Panc1 (cell line): ENCODE measurements at regions of chr16 and their contacts with region 1.

Region 1: GRCh38 chr16:25051406-25052150 is 36.4 kb upstream of the ARHGAP17 start:
- DNase-seq: no peak
- ATAC-seq: no peak
- H3K4me3 ChIP-seq: peak overlapping the region in 1 of 2 experiments; percentile 23; a peak in 2 of 4 replicates
- H3K27ac ChIP-seq: peak overlapping the region; percentile 97
- H3K4me1 ChIP-seq: peaks cover 40% of the 10 kb centered on the region
- H3K27me3 ChIP-seq: no peaks in the 10 kb centered on the region
- CTCF ChIP-seq: no peak

Region 2: GRCh38 chr16:24918641-24919040 is 132.9 kb before region 1 on chr16:
- CTCF ChIA-PET with region 1: interaction called, 11 read pairs
- POLR2A ChIA-PET with region 1: no interaction called
- in situ Hi-C with region 1: no loop called
- intact Hi-C with region 1: no loop called
- DNase-seq: no peak
- ATAC-seq: no peak
- H3K4me3 ChIP-seq: no peak overlapping the region
- H3K27ac ChIP-seq: no peak overlapping the region
- H3K4me1 ChIP-seq: no peaks in the 10 kb centered on the region
- H3K27me3 ChIP-seq: no peaks in the 10 kb centered on the region
- CTCF ChIP-seq: no peak

Region 3: GRCh38 chr16:25014500-25015147 is 37.0 kb before region 1 on chr16:
- CTCF ChIA-PET with region 1: interaction called, 3 read pairs
- POLR2A ChIA-PET with region 1: interaction called, 14 read pairs
- in situ Hi-C with region 1: no loop called
- intact Hi-C with region 1: no loop called
- DNase-seq: no peak
- ATAC-seq: peak; percentile 58
- H3K4me3 ChIP-seq: peak overlapping the region; percentile 75 to 87
- H3K27ac ChIP-seq: peak overlapping the region; percentile 83
- H3K4me1 ChIP-seq: peaks cover 31% of the 10 kb centered on the region
- H3K27me3 ChIP-seq: no peaks in the 10 kb centered on the region
- CTCF ChIP-seq: no peak

Region 4: DNA sequence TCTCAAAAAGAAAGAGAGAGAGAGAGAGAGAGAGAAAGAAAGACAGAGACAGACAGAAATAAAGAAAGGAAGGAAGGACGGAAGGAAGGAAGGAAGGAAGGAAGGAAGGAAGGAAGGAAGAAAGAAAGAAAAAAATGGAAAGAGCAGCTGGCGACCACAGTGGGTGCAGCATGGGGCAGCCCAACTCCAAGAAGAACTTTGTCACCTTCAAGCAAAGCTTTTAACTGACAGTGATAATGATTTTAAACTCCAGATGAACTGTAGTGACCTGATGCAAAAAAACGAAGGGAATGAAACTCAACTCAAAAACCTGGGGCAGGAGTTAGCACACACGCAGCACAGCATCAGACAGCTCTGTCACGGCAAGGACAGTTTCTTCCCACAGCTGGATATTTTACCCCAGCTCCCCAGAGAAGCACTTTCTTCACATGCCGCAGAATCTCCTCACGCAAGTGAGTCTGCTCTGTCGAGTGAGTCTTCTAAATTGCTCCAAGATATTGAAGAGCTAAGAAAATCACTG is 31.4 kb before region 1 on chr16:
- CTCF ChIA-PET with region 1: interaction called, 10 read pairs
- POLR2A ChIA-PET with region 1: interaction called, 14 read pairs
- in situ Hi-C with region 1: no loop called
- intact Hi-C with region 1: no loop called
- DNase-seq: no peak
- ATAC-seq: no peak
- H3K4me3 ChIP-seq: no peak overlapping the region
- H3K27ac ChIP-seq: no peak overlapping the region; the same call in 1 of the 2 replicates
- H3K4me1 ChIP-seq: no peaks in the 10 kb centered on the region
- H3K27me3 ChIP-seq: no peaks in the 10 kb centered on the region
- CTCF ChIP-seq: no peak

Region 5: GRCh38 chr16:25033848-25034247 is 17.7 kb before region 1 on chr16:
- CTCF ChIA-PET with region 1: no interaction called
- POLR2A ChIA-PET with region 1: no interaction called
- in situ Hi-C with region 1: no loop called
- intact Hi-C with region 1: no loop called
- DNase-seq: no peak
- ATAC-seq: no peak
- H3K4me3 ChIP-seq: no peak overlapping the region
- H3K27ac ChIP-seq: peak overlapping the region; percentile 31
- H3K4me1 ChIP-seq: peaks cover 30% of the 10 kb centered on the region
- H3K27me3 ChIP-seq: no peaks in the 10 kb centered on the region
- CTCF ChIP-seq: no peak

Region 6: GRCh38 chr16:25126820-25127232 is 75.2 kb after region 1 on chr16:
- CTCF ChIA-PET with region 1: interaction called, 3 read pairs
- POLR2A ChIA-PET with region 1: no interaction called
- in situ Hi-C with region 1: no loop called
- intact Hi-C with region 1: loop called (anchors 1 kb)
- DNase-seq: no peak
- ATAC-seq: peak; percentile 80
- H3K4me3 ChIP-seq: no peak overlapping the region
- H3K27ac ChIP-seq: no peak overlapping the region
- H3K4me1 ChIP-seq: no peaks in the 10 kb centered on the region
- H3K27me3 ChIP-seq: no peaks in the 10 kb centered on the region
- CTCF ChIP-seq: peak; percentile 87

Region 7: GRCh38 chr16:25135254-25135878 is 83.8 kb after region 1 on chr16:
- CTCF ChIA-PET with region 1: no interaction called
- POLR2A ChIA-PET with region 1: no interaction called
- in situ Hi-C with region 1: no loop called
- intact Hi-C with region 1: loop called (anchors 1 kb)
- DNase-seq: no peak
- ATAC-seq: peak; percentile 84
- H3K4me3 ChIP-seq: no peak overlapping the region
- H3K27ac ChIP-seq: no peak overlapping the region
- H3K4me1 ChIP-seq: no peaks in the 10 kb centered on the region
- H3K27me3 ChIP-seq: no peaks in the 10 kb centered on the region
- CTCF ChIP-seq: peak; percentile 48

Region 8: GRCh38 chr16:25224731-25225319 is 173.2 kb after region 1 on chr16:
- CTCF ChIA-PET with region 1: interaction called, 6 read pairs
- POLR2A ChIA-PET with region 1: no interaction called
- in situ Hi-C with region 1: no loop called
- intact Hi-C with region 1: loop called (anchors 5 kb)
- DNase-seq: no peak
- ATAC-seq: no peak
- H3K4me3 ChIP-seq: no peak overlapping the region
- H3K27ac ChIP-seq: no peak overlapping the region
- H3K4me1 ChIP-seq: no peaks in the 10 kb centered on the region
- H3K27me3 ChIP-seq: no peaks in the 10 kb centered on the region
- CTCF ChIP-seq: no peak